Heart left ventricle (tissue), 16 donors: ENCODE measurements at regions of chrX and their contacts with region 1.

Region 1: GRCh38 chrX:48107717-48108116 is 22.7 kb upstream of the SPACA5B start:
- DNase-seq: no peak
- ATAC-seq: no peak
- H3K4me3 ChIP-seq: no peak overlapping the region
- H3K27ac ChIP-seq: no peak overlapping the region
- H3K4me1 ChIP-seq: no peaks in the 10 kb centered on the region
- H3K27me3 ChIP-seq: no peaks in the 10 kb centered on the region
- CTCF ChIP-seq: no peak
- POLR2A ChIP-seq: no peak

Region 2: DNA sequence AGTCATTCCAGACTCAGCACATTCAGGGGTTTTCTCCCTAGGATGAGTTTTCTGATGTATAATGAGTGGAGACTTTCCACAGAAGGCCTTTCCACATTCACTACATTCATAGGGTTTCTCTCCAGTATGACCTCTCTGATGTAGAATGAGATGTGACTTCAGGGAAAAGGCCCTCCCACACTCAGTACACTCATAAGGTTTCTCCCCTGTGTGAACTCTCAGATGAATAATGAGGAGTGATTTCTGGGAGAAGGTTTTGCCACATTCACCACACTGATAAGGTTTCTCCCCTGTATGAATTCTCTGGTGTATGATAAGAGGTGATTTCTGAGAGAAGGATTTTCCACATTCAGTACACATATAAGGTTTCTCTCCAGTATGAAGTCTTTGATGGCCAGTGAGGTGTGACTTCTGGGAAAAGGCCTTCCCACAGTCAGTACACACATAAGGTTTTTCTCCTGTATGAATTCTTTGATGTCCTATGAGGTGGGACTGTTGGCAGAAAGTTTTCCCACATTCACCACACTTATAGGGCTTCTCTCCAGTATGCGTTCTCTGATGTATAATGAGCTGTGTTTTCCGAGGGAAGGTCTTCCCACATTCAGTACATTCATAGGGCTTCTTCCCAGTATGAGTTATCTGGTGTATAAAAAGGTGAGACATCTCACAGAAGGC is 49.0 kb before region 1 on chrX:
- intact Hi-C with region 1: loop called in 1 of 10 experiments (anchors 10 kb)
- DNase-seq: no peak
- ATAC-seq: no peak
- H3K4me3 ChIP-seq: no peak overlapping the region
- H3K27ac ChIP-seq: no peak overlapping the region
- H3K4me1 ChIP-seq: no peaks in the 10 kb centered on the region
- H3K27me3 ChIP-seq: no peaks in the 10 kb centered on the region
- CTCF ChIP-seq: no peak
- POLR2A ChIP-seq: no peak